CD14-positive monocyte (primary cell): ENCODE measurements at regions of chr7 and their contacts with region 1.

Region 1: GRCh38 chr7:157875230-157876179 is 538.7 kb downstream of the DNAJB6 start:
- DNase-seq: peak; percentile 27 to 51 (median 37)
- H3K4me3 ChIP-seq: peak overlapping the region in 1 of 3 experiments; percentile 25
- H3K4me3 Mint-ChIP-seq: peak overlapping the region; percentile 67 to 77
- H3K27ac ChIP-seq: no peak overlapping the region
- H3K27ac Mint-ChIP-seq: peak overlapping the region in 2 of 7 donors; percentile 22 to 58
- H3K4me1 ChIP-seq: peaks cover 11 to 13% of the 10 kb centered on the region in 2 donors
- H3K4me1 Mint-ChIP-seq: peaks cover 18% of the 10 kb centered on the region
- H3K27me3 ChIP-seq: no peaks in the 10 kb centered on the region
- H3K27me3 Mint-ChIP-seq: peaks cover 10 to 19% (median 10%) of the 10 kb centered on the region in 3 donors
- CTCF ChIP-seq: peak; percentile 94

Region 2: GRCh38 chr7:157432957-157433576 is 442.4 kb before region 1 on chr7:
- intact Hi-C with region 1: loop called (anchors 2 to 5 kb)
- DNase-seq: peak; percentile 4 to 19 (median 9)
- H3K4me3 ChIP-seq: peak overlapping the region in 1 of 3 experiments; percentile 15
- H3K4me3 Mint-ChIP-seq: peak overlapping the region; percentile 10 to 68
- H3K27ac ChIP-seq: no peak overlapping the region
- H3K27ac Mint-ChIP-seq: peak overlapping the region in 1 of 7 donors; percentile 80
- H3K4me1 ChIP-seq: peaks cover 7 to 8% of the 10 kb centered on the region in 2 donors
- H3K4me1 Mint-ChIP-seq: peaks cover 12% of the 10 kb centered on the region
- H3K27me3 ChIP-seq: no peaks in the 10 kb centered on the region
- H3K27me3 Mint-ChIP-seq: peaks cover 4 to 11% (median 9%) of the 10 kb centered on the region in 3 donors
- CTCF ChIP-seq: peak; percentile 72

Region 3: GRCh38 chr7:157760004-157760730 is 115.3 kb before region 1 on chr7:
- intact Hi-C with region 1: loop called in 1 of 2 experiments (anchors 10 kb)
- DNase-seq: no peak
- H3K4me3 ChIP-seq: no peak overlapping the region
- H3K4me3 Mint-ChIP-seq: no peak overlapping the region
- H3K27ac ChIP-seq: no peak overlapping the region
- H3K27ac Mint-ChIP-seq: no peak overlapping the region
- H3K4me1 ChIP-seq: no peaks in the 10 kb centered on the region
- H3K4me1 Mint-ChIP-seq: no peaks in the 10 kb centered on the region
- H3K27me3 ChIP-seq: no peaks in the 10 kb centered on the region
- H3K27me3 Mint-ChIP-seq: peaks cover 2 to 17% (median 5%) of the 10 kb centered on the region in 3 donors
- CTCF ChIP-seq: no peak

Region 4: GRCh38 chr7:157827045-157827862 is 48.3 kb before region 1 on chr7:
- intact Hi-C with region 1: loop called in 1 of 2 experiments (anchors 10 kb)
- DNase-seq: no peak
- H3K4me3 ChIP-seq: no peak overlapping the region
- H3K4me3 Mint-ChIP-seq: no peak overlapping the region
- H3K27ac ChIP-seq: no peak overlapping the region
- H3K27ac Mint-ChIP-seq: no peak overlapping the region
- H3K4me1 ChIP-seq: no peaks in the 10 kb centered on the region
- H3K4me1 Mint-ChIP-seq: peaks cover 3% of the 10 kb centered on the region
- H3K27me3 ChIP-seq: no peaks in the 10 kb centered on the region
- H3K27me3 Mint-ChIP-seq: peaks cover 2 to 4% (median 3%) of the 10 kb centered on the region in 3 donors
- CTCF ChIP-seq: no peak

Region 5: GRCh38 chr7:158549616-158550393 is 674.3 kb after region 1 on chr7:
- intact Hi-C with region 1: no loop called
- DNase-seq: no peak
- H3K4me3 ChIP-seq: no peak overlapping the region
- H3K4me3 Mint-ChIP-seq: no peak overlapping the region
- H3K27ac ChIP-seq: no peak overlapping the region
- H3K27ac Mint-ChIP-seq: no peak overlapping the region
- H3K4me1 ChIP-seq: no peaks in the 10 kb centered on the region
- H3K4me1 Mint-ChIP-seq: no peaks in the 10 kb centered on the region
- H3K27me3 ChIP-seq: no peaks in the 10 kb centered on the region
- H3K27me3 Mint-ChIP-seq: peaks cover 3 to 6% (median 5%) of the 10 kb centered on the region in 3 donors
- CTCF ChIP-seq: no peak